ENCODE measurements at regions of chr1 and their contacts with region 1.

Region 1: DNA sequence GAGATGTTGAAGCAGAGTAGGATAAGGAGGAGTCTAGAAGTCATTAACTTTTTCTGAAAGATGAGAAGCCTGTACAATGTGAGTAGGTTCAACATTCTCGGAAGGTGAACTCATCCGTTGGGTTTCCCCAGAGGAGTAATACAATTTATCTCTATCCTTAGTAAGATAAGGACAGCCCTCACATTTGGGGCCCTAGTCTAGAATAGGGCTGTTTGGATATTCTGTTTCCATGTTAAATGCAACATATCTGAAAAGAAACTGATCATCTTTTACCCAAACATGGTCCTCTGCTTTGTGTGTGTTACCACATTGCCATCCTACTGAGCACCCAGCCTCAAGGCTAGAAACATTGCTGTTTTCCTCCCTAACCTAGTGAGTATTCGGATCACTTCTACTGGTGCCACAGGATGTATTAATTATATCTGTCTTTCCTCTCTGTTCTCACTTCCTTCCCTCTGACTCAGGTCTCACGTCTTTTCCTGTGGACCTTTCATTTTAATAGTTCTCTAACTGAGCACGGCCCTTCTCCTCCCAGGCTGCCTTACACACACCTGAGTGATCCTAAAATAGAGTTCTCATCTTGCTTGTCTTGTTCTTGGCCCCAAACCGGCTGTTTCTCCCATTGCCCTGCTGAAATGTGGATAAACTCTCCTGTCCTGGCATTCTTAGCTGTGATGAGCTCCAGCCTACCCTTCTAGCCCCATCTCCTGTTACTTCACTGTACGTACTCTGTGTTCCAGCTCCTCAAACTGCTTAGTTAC is 91.7 kb downstream of the CDC14A start:
- DNase-seq: peak; percentile 49
- ATAC-seq: peak; percentile 79
- H3K4me3 Mint-ChIP-seq: peak overlapping the region; percentile 68
- H3K27ac Mint-ChIP-seq: peak overlapping the region; percentile 93
- H3K4me1 Mint-ChIP-seq: peaks cover 84% of the 10 kb centered on the region
- H3K27me3 Mint-ChIP-seq: no peaks in the 10 kb centered on the region

Region 2: GRCh38 chr1:100366209-100366525 is 77.8 kb before region 1 on chr1:
- CTCF ChIA-PET with region 1: no interaction called
- POLR2A ChIA-PET with region 1: no interaction called
- intact Hi-C with region 1: no loop called
- DNase-seq: no peak
- ATAC-seq: peak; percentile 42
- H3K4me3 Mint-ChIP-seq: no peak overlapping the region
- H3K27ac Mint-ChIP-seq: peak overlapping the region; percentile 14
- H3K4me1 Mint-ChIP-seq: peaks cover 74% of the 10 kb centered on the region
- H3K27me3 Mint-ChIP-seq: no peaks in the 10 kb centered on the region

Region 3: DNA sequence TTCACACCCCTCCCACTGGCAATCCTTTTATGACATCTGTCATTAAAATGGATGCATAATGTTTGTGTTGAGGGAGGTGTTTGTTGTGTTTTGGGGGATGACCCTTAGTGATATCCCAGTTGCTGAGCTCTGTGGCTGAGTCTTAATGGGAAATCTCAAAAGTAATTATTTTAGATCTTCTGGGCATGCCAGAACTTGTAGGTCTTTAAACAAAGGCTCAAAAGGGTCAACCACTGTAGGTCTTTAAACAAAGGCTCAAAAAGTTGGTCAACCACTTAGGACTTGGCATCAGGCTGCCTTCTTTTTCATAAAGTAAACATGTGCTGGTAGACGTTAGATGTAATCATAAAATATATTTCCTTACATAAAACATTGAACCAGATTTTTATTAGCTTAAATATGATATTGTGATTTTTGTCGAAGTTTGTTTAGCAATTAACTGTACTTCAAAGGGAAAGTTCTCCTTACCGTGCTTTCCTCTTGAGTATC is 13.6 kb before region 1 on chr1:
- CTCF ChIA-PET with region 1: interaction called, 3 read pairs
- POLR2A ChIA-PET with region 1: no interaction called
- intact Hi-C with region 1: loop called (anchors 1 to 2 kb)
- DNase-seq: no peak
- ATAC-seq: no peak
- H3K4me3 Mint-ChIP-seq: no peak overlapping the region
- H3K27ac Mint-ChIP-seq: peak overlapping the region; percentile 10
- H3K4me1 Mint-ChIP-seq: peaks cover 66% of the 10 kb centered on the region
- H3K27me3 Mint-ChIP-seq: no peaks in the 10 kb centered on the region

Region 4: GRCh38 chr1:100530880-100531487 is 87.0 kb after region 1 on chr1:
- CTCF ChIA-PET with region 1: no interaction called
- POLR2A ChIA-PET with region 1: no interaction called
- intact Hi-C with region 1: no loop called
- DNase-seq: peak; percentile 44
- ATAC-seq: peak; percentile 95
- H3K4me3 Mint-ChIP-seq: no peak overlapping the region
- H3K27ac Mint-ChIP-seq: peak overlapping the region; percentile 29
- H3K4me1 Mint-ChIP-seq: peaks cover 24% of the 10 kb centered on the region
- H3K27me3 Mint-ChIP-seq: peaks cover 9% of the 10 kb centered on the region

Region 5: DNA sequence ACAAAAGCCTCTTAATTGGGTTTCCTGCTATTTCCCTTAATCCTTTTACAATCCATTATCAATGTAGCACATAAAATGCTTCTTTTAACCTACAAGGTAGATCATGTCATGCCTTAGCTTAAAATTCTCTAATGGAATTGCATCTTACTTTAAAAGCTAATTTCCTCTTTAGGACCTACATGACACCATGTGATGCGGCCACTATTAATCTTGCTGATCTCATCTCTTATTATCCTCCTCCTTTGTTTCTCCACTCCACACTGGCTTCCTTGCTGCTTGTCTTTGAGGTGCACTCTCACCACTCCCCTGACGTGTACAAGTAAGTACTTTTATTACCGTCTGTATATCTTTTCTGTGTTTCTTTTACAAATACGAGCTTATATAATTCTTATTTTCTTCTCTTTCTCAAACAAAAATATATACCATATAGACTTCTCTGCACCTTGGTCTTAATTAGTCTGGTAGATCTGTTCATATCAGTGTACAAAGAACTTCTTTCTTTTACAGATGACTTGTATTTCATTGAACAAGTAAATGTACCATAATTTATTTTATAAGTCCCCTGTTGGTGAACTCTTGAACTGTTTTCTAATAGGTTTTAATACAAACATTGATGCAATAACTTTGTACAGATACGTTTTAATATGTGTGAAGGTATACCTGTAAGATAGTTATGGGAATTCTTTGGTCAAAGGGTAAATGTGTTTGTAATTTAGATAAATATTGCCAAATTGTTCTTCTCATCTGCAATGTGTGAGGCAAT is 122.1 kb after region 1 on chr1:
- CTCF ChIA-PET with region 1: no interaction called
- POLR2A ChIA-PET with region 1: interaction called, 11 read pairs
- intact Hi-C with region 1: no loop called
- DNase-seq: no peak
- ATAC-seq: no peak
- H3K4me3 Mint-ChIP-seq: no peak overlapping the region
- H3K27ac Mint-ChIP-seq: no peak overlapping the region
- H3K4me1 Mint-ChIP-seq: no peaks in the 10 kb centered on the region
- H3K27me3 Mint-ChIP-seq: peaks cover 17% of the 10 kb centered on the region